ENCODE measurements at regions of chr14 and their contacts with region 1.

Region 1: GRCh38 chr14:76812211-76813044 is at the start of gene ANGEL1:
- DNase-seq: peak; percentile 95 to 99 (median 98)
- ATAC-seq: peak; percentile 90
- H3K4me3 ChIP-seq: peak within 1 kb of the TSS; percentile 73 to 90
- H3K4me3 Mint-ChIP-seq: peak within 1 kb of the TSS; percentile 95
- H3K27ac ChIP-seq: peak within 1 kb of the TSS; percentile 61 to 91
- H3K27ac Mint-ChIP-seq: peak within 1 kb of the TSS; percentile 89
- H3K4me1 ChIP-seq: peaks cover 22% of the 10 kb centered on the region
- H3K4me1 Mint-ChIP-seq: peaks cover 33% of the 10 kb centered on the region
- H3K27me3 ChIP-seq: no peaks in the 10 kb centered on the region
- H3K27me3 Mint-ChIP-seq: no peaks in the 10 kb centered on the region
- CTCF ChIP-seq: no peak
- total RNA-seq, gene ANGEL1: 6.4 to 6.6 TPM

Region 2: GRCh38 chr14:75982266-75983018 is 830.0 kb before region 1 on chr14:
- CTCF ChIA-PET with region 1: no interaction called
- POLR2A ChIA-PET with region 1: no interaction called
- intact Hi-C with region 1: loop called in 1 of 2 experiments (anchors 10 kb)
- DNase-seq: peak; percentile 57 to 87 (median 77)
- ATAC-seq: peak; percentile 59
- H3K4me3 ChIP-seq: peak overlapping the region; percentile 59 to 87
- H3K4me3 Mint-ChIP-seq: peak overlapping the region; percentile 82
- H3K27ac ChIP-seq: peak overlapping the region; percentile 64 to 75
- H3K27ac Mint-ChIP-seq: peak overlapping the region; percentile 86
- H3K4me1 ChIP-seq: peaks cover 33% of the 10 kb centered on the region
- H3K4me1 Mint-ChIP-seq: peaks cover 57% of the 10 kb centered on the region
- H3K27me3 ChIP-seq: no peaks in the 10 kb centered on the region
- H3K27me3 Mint-ChIP-seq: no peaks in the 10 kb centered on the region
- CTCF ChIP-seq: peak; percentile 48

Region 3: DNA sequence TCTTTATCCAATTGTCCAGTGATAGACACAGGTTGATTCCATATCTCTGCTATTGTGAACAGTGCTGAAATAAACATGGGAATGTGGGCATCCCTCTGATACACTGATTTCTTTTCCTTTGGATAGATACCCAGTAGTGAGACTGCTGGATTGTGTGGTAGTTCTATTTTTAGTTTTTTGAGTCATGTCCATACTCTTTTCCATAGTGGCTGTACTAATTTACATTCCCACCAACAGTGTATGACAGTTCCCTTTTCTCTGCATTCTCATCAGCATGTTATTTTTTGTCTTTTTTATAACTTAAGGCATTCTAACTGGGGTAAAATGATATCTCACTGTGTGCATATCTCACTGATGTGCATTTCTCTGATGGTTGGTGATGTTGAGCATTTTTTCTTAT is 75.9 kb before region 1 on chr14:
- CTCF ChIA-PET with region 1: no interaction called
- POLR2A ChIA-PET with region 1: no interaction called
- intact Hi-C with region 1: no loop called
- DNase-seq: no peak
- ATAC-seq: no peak
- H3K4me3 ChIP-seq: no peak overlapping the region
- H3K4me3 Mint-ChIP-seq: no peak overlapping the region
- H3K27ac ChIP-seq: no peak overlapping the region
- H3K27ac Mint-ChIP-seq: no peak overlapping the region
- H3K4me1 ChIP-seq: no peaks in the 10 kb centered on the region
- H3K4me1 Mint-ChIP-seq: no peaks in the 10 kb centered on the region
- H3K27me3 ChIP-seq: no peaks in the 10 kb centered on the region
- H3K27me3 Mint-ChIP-seq: peaks cover 7% of the 10 kb centered on the region
- CTCF ChIP-seq: no peak

Region 4: DNA sequence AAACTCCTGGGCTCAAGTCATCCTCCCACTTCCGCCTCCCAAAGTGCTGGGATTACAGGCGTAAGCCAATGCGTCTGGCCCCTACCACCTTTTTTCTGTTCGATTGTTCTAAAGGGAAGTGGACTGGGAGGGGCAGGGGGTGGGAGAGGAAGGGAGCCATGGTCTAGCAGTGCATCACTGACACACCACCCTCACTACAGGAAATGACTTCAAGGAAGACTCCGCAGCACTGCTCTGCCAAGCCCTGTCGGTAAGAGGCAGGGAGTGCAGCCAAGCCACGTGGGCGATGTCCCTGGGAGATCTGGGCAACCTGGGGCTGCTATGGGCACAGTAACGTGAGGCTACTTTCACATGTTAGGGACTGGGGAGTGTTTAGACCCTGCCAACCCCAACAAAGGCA is 31.8 kb after region 1 on chr14:
- CTCF ChIA-PET with region 1: no interaction called
- POLR2A ChIA-PET with region 1: interaction called, 3 read pairs
- intact Hi-C with region 1: loop called in 1 of 2 experiments (anchors 1 kb)
- DNase-seq: peak; percentile 15 to 74 (median 54)
- ATAC-seq: peak; percentile 99
- H3K4me3 ChIP-seq: peak overlapping the region in 1 of 2 experiments; percentile 10
- H3K4me3 Mint-ChIP-seq: peak overlapping the region; percentile 52
- H3K27ac ChIP-seq: no peak overlapping the region
- H3K27ac Mint-ChIP-seq: no peak overlapping the region
- H3K4me1 ChIP-seq: peaks cover 5% of the 10 kb centered on the region
- H3K4me1 Mint-ChIP-seq: peaks cover 8% of the 10 kb centered on the region
- H3K27me3 ChIP-seq: peaks cover 0 to 2% of the 10 kb centered on the region in 2 experiments
- H3K27me3 Mint-ChIP-seq: peaks cover 19% of the 10 kb centered on the region
- CTCF ChIP-seq: peak; percentile 38

Region 5: GRCh38 chr14:76882651-76883050 is 70.2 kb after region 1 on chr14:
- CTCF ChIA-PET with region 1: no interaction called
- POLR2A ChIA-PET with region 1: no interaction called
- intact Hi-C with region 1: no loop called
- DNase-seq: no peak
- ATAC-seq: no peak
- H3K4me3 ChIP-seq: no peak overlapping the region
- H3K4me3 Mint-ChIP-seq: no peak overlapping the region
- H3K27ac ChIP-seq: no peak overlapping the region
- H3K27ac Mint-ChIP-seq: no peak overlapping the region
- H3K4me1 ChIP-seq: no peaks in the 10 kb centered on the region
- H3K4me1 Mint-ChIP-seq: peaks cover 5% of the 10 kb centered on the region
- H3K27me3 ChIP-seq: no peaks in the 10 kb centered on the region
- H3K27me3 Mint-ChIP-seq: no peaks in the 10 kb centered on the region
- CTCF ChIP-seq: no peak

Region 6: GRCh38 chr14:77028384-77029231 is 216.2 kb after region 1 on chr14 and contains the start of gene IRF2BPL:
- CTCF ChIA-PET with region 1: no interaction called
- POLR2A ChIA-PET with region 1: no interaction called
- intact Hi-C with region 1: loop called (anchors 5 kb)
- DNase-seq: peak; percentile 86 to 98 (median 94)
- ATAC-seq: peak; percentile 68
- H3K4me3 ChIP-seq: peak within 1 kb of the TSS; percentile 66 to 94
- H3K4me3 Mint-ChIP-seq: peak within 1 kb of the TSS; percentile 93
- H3K27ac ChIP-seq: peak within 1 kb of the TSS; percentile 90 to 94
- H3K27ac Mint-ChIP-seq: peak within 1 kb of the TSS; percentile 96
- H3K4me1 ChIP-seq: peaks cover 69% of the 10 kb centered on the region
- H3K4me1 Mint-ChIP-seq: peaks cover 60% of the 10 kb centered on the region
- H3K27me3 ChIP-seq: no peaks in the 10 kb centered on the region
- H3K27me3 Mint-ChIP-seq: no peaks in the 10 kb centered on the region
- CTCF ChIP-seq: peak; percentile 2
- total RNA-seq, gene IRF2BPL: 53.7 to 53.9 TPM

Region 7: GRCh38 chr14:77320238-77320935 is 508.0 kb after region 1 on chr14 and contains the start of gene POMT2:
- CTCF ChIA-PET with region 1: no interaction called
- POLR2A ChIA-PET with region 1: no interaction called
- intact Hi-C with region 1: loop called (anchors 1 to 2 kb)
- DNase-seq: peak; percentile 85 to 95 (median 91)
- ATAC-seq: peak; percentile 49
- H3K4me3 ChIP-seq: peak within 1 kb of the TSS; percentile 89 to 100
- H3K4me3 Mint-ChIP-seq: peak within 1 kb of the TSS; percentile 99
- H3K27ac ChIP-seq: peak within 1 kb of the TSS; percentile 90 to 97
- H3K27ac Mint-ChIP-seq: peak within 1 kb of the TSS; percentile 98
- H3K4me1 ChIP-seq: peaks cover 12% of the 10 kb centered on the region
- H3K4me1 Mint-ChIP-seq: peaks cover 20% of the 10 kb centered on the region
- H3K27me3 ChIP-seq: no peaks in the 10 kb centered on the region
- H3K27me3 Mint-ChIP-seq: no peaks in the 10 kb centered on the region
- CTCF ChIP-seq: no peak
- total RNA-seq, gene POMT2: 8.4 to 9.6 TPM

Region 8: DNA sequence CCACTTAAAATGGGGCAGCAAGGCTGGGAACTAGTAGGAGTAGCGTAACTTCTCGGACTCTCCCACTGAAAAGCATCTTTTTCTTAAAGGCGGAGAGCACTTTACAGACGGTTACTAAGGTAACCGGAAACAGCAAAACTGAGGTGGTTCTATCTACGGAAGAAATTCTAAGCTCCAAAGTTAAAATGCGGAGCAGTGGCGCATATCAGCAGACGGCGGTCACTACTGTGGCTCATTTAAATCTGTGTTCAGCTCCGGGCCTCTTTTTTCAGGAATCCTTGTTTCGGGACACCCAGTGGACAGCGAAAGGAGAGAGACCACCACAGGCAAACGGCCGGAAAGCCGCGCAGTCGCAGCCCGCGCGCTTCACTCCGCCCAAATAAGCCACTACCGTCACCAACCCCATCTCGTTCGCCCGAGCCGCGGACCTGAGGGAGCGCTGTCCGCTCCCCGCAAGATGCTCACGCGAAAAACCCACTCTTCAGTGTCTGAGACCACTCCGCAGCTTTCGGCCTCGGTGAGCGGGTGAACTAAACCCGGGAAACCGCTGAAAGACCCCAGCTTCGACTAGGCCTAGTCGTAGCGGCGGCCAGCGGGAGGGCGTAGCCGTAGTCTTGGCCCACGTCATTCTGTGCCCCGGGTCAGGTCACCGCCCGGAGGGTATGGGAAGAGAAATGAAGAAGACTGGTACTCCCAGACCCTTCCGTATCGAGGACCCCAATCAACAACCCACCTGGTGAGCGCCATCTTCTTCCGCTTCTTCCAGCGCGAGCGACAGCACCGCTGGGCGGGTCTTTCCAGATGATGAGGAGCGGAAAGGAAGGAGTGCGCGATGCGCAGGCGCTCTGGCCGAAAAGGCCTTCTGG is 948.2 kb after region 1 on chr14 and contains the start of gene SNW1:
- CTCF ChIA-PET with region 1: no interaction called
- POLR2A ChIA-PET with region 1: no interaction called
- intact Hi-C with region 1: loop called in 1 of 2 experiments (anchors 10 kb)
- DNase-seq: peak; percentile 78 to 97 (median 89)
- ATAC-seq: peak; percentile 91
- H3K4me3 ChIP-seq: peak within 1 kb of the TSS; percentile 78 to 90
- H3K4me3 Mint-ChIP-seq: peak within 1 kb of the TSS; percentile 96
- H3K27ac ChIP-seq: peak within 1 kb of the TSS; percentile 97 to 99
- H3K27ac Mint-ChIP-seq: peak within 1 kb of the TSS; percentile 98
- H3K4me1 ChIP-seq: peaks cover 34% of the 10 kb centered on the region
- H3K4me1 Mint-ChIP-seq: peaks cover 50% of the 10 kb centered on the region
- H3K27me3 ChIP-seq: no peaks in the 10 kb centered on the region
- H3K27me3 Mint-ChIP-seq: no peaks in the 10 kb centered on the region
- CTCF ChIP-seq: no peak
- total RNA-seq, gene SNW1: 115 to 124 TPM